K562 (cell line): ENCODE measurements at regions of chr17 and their contacts with region 1.

Region 1: GRCh38 chr17:28896884-28897768 is at the start of gene FLOT2:
- DNase-seq: peak; percentile 84 to 88 (median 86)
- ATAC-seq: peak; percentile 88
- H3K4me3 ChIP-seq: peak within 1 kb of the TSS; percentile 95
- H3K27ac ChIP-seq: peak within 1 kb of the TSS; percentile 91
- H3K4me1 ChIP-seq: peaks cover 38 to 48% of the 10 kb centered on the region in 2 experiments
- H3K27me3 ChIP-seq: no peaks in the 10 kb centered on the region
- CTCF ChIP-seq: peak in 2 of 3 experiments; percentile 32 to 66; a peak in 5 of 6 replicates
- EP300 ChIP-seq: no peak
- POLR2A ChIP-seq: peak; percentile 85
- RAD21 ChIP-seq: peak; percentile 5 to 31
- polyA plus RNA-seq, gene FLOT2: 17.5 to 30.1 TPM

Region 2: GRCh38 chr17:28908640-28909167 is 11.6 kb after region 1 on chr17:
- CTCF ChIA-PET with region 1: no interaction called
- POLR2A ChIA-PET with region 1: interaction called, 15 read pairs
- in situ Hi-C with region 1: no loop called
- intact Hi-C with region 1: no loop called
- DNase-seq: no peak
- ATAC-seq: no peak
- H3K4me3 ChIP-seq: no peak overlapping the region
- H3K27ac ChIP-seq: no peak overlapping the region; the same call in 2 of the 3 replicates
- H3K4me1 ChIP-seq: peaks cover 60 to 69% of the 10 kb centered on the region in 2 experiments
- H3K27me3 ChIP-seq: no peaks in the 10 kb centered on the region
- CTCF ChIP-seq: no peak
- EP300 ChIP-seq: no peak
- POLR2A ChIP-seq: no peak
- RAD21 ChIP-seq: no peak

Region 3: DNA sequence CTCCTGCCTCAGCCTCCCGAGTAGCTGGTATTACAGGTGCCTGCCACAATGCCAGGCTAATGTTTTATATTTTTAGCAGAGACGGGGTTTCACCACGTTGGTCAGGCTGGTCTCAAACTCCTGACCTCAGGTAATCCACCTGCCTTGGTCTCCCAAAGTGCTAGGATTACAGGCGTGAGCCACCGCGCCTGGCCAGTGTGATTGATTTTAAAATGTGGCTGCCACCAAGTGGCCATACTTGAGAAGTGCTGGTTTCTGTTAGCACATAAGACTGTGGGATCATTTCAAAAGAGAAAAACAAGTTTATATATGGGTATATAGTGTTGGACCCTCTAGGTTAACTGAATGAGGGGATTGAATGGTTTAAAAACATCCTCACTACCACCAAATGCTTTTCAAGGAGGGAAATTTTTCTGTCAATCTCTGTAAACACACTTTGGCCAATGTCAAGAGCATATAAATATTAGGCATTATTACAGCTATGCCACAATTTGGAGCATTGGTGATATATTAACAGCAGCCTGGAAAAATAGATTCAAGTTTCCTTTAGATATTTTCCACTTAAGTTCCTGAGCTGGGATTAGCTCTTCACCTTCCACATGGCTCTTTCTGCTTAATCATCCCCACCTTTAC is 19.3 kb after region 1 on chr17:
- CTCF ChIA-PET with region 1: no interaction called
- POLR2A ChIA-PET with region 1: interaction called, 15 read pairs
- in situ Hi-C with region 1: no loop called
- intact Hi-C with region 1: no loop called
- DNase-seq: peak in 2 of 4 experiments; percentile 44 to 73
- ATAC-seq: peak; percentile 82
- H3K4me3 ChIP-seq: no peak overlapping the region
- H3K27ac ChIP-seq: no peak overlapping the region; the same call in 2 of the 3 replicates
- H3K4me1 ChIP-seq: peaks cover 17 to 18% of the 10 kb centered on the region in 2 experiments
- H3K27me3 ChIP-seq: no peaks in the 10 kb centered on the region
- CTCF ChIP-seq: peak; percentile 73 to 82 (median 76)
- EP300 ChIP-seq: no peak
- POLR2A ChIP-seq: no peak
- RAD21 ChIP-seq: peak; percentile 76 to 84